Naive thymus-derived CD4-positive, alpha-beta T cell (primary cell): ENCODE measurements at regions of chr12 and their contacts with region 1.

Region 1: DNA sequence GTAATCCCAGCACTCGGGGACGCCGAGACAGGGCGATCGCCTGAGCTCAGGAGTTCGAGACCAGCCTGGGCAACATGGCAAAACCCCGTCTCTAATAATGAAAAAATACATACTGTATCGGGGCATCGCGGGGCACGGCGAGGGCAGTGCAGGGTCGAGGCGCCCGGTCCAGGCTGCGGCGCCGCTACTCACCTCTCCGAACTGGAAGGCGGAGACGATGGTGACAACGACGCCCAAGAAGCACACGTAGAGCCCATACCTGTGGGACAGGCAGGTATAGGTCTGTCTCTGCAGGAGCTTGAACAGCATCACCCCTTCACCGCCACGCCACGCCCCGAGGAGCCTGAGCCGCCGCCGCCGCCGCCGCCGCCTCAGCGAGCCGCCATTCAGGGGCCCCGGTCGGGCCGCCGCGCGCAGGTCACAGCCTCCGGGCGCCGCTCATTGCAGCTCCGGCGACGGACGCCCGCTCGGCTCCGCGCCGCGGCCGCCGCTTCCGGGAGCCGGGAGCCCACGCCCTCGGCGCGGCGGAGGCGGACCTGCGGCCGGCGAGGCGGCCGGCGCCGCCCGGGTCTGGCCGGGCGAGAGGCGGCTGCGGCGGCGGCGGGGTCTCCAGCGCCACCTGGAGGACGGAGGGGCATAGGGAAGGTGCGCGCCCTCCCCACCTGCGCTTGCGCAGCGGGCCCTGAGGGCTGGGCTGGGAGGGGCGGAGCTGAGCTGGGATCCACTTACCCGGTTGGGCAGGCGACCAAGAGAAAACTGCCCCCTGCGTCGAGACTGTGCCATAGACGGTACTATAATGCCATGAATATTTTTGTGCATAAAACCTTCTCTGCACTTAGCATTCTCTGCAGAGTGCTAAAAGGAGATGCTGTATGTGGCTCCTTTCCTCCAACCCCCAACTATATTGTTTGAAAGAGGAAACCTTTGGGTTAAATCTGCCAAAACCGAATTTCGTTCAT is at the start of gene GNPTAB:
- DNase-seq: peak; percentile 92 to 98 (median 95)
- ATAC-seq: peak; percentile 98
- H3K4me3 ChIP-seq: peak within 1 kb of the TSS; percentile 89
- H3K4me3 Mint-ChIP-seq: peak within 1 kb of the TSS; percentile 88 to 99 (median 98)
- H3K27ac ChIP-seq: peak within 1 kb of the TSS; percentile 77
- H3K27ac Mint-ChIP-seq: peak within 1 kb of the TSS; percentile 76 to 98 (median 93)
- H3K4me1 ChIP-seq: peaks cover 10 to 19% of the 10 kb centered on the region in 2 donors
- H3K4me1 Mint-ChIP-seq: peaks cover 22 to 52% (median 47%) of the 10 kb centered on the region in 7 donors
- H3K27me3 ChIP-seq: no peaks in the 10 kb centered on the region
- H3K27me3 Mint-ChIP-seq: no peaks in the 10 kb centered on the region
- total RNA-seq, gene GNPTAB: 42.0 to 85.1 (median 62.2) TPM

Region 2: GRCh38 chr12:101280006-101280505 is 550.6 kb before region 1 on chr12 and contains the start of gene UTP20:
- CTCF ChIA-PET with region 1: no interaction called
- POLR2A ChIA-PET with region 1: no interaction called
- intact Hi-C with region 1: loop called (anchors 2 to 5 kb)
- DNase-seq: peak; percentile 90 to 94 (median 92)
- ATAC-seq: peak; percentile 100
- H3K4me3 ChIP-seq: peak within 1 kb of the TSS; percentile 72
- H3K4me3 Mint-ChIP-seq: peak within 1 kb of the TSS; percentile 92 to 97 (median 96)
- H3K27ac ChIP-seq: peak within 1 kb of the TSS; percentile 63
- H3K27ac Mint-ChIP-seq: peak within 1 kb of the TSS; percentile 77 to 94 (median 87)
- H3K4me1 ChIP-seq: peaks cover 5% of the 10 kb centered on the region in 2 donors
- H3K4me1 Mint-ChIP-seq: peaks cover 11 to 28% (median 16%) of the 10 kb centered on the region in 7 donors
- H3K27me3 ChIP-seq: no peaks in the 10 kb centered on the region
- H3K27me3 Mint-ChIP-seq: peaks cover 8 to 24% (median 16%) of the 10 kb centered on the region in 5 donors
- total RNA-seq, gene UTP20: 10.8 to 20.8 (median 14.9) TPM

Region 3: GRCh38 chr12:101670007-101670687 is 160.5 kb before region 1 on chr12:
- CTCF ChIA-PET with region 1: no interaction called
- POLR2A ChIA-PET with region 1: no interaction called
- intact Hi-C with region 1: loop called in 1 of 2 experiments (anchors 2 kb)
- DNase-seq: peak in 7 of 9 donors; percentile 30 to 59 (median 54)
- ATAC-seq: peak; percentile 88
- H3K4me3 ChIP-seq: no peak overlapping the region
- H3K4me3 Mint-ChIP-seq: peak overlapping the region in 4 of 10 donors; percentile 30 to 44 (median 39)
- H3K27ac ChIP-seq: no peak overlapping the region
- H3K27ac Mint-ChIP-seq: peak overlapping the region in 8 of 9 donors; percentile 10 to 71 (median 40)
- H3K4me1 ChIP-seq: peaks cover 4 to 18% of the 10 kb centered on the region in 2 donors
- H3K4me1 Mint-ChIP-seq: peaks cover 13 to 28% (median 21%) of the 10 kb centered on the region in 7 donors
- H3K27me3 ChIP-seq: no peaks in the 10 kb centered on the region
- H3K27me3 Mint-ChIP-seq: peaks cover 5 to 15% (median 9%) of the 10 kb centered on the region in 5 donors

Region 4: DNA sequence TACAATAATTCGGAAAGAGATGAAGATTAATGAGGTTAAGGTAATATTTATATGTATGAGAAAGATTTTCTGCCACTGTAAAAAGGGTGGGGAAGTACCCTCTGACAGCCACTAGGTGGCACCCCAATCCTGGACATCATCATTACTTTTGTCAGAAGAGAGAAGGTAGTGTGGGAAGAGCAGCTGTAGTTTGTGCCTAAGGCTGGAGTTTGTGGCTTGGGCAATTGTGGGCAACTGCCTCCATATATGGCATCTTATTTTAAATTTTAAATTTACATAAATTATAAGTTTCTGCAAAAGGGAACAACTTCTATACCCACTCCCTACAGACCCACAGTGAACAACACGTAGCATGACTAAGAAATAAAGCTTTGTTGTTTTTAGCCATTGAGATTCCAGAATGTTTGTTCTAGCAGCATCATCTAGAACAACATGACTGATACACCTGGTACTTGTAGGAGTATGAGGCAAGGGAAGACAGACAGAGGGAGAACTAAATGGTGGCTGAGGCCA is 56.9 kb before region 1 on chr12:
- CTCF ChIA-PET with region 1: interaction called, 61 read pairs
- POLR2A ChIA-PET with region 1: interaction called, 22 read pairs
- intact Hi-C with region 1: loop called (anchors 1 kb)
- DNase-seq: peak; percentile 37 to 76 (median 72)
- ATAC-seq: peak; percentile 94
- H3K4me3 ChIP-seq: no peak overlapping the region
- H3K4me3 Mint-ChIP-seq: no peak overlapping the region
- H3K27ac ChIP-seq: no peak overlapping the region
- H3K27ac Mint-ChIP-seq: peak overlapping the region in 2 of 9 donors; percentile 25 to 65
- H3K4me1 ChIP-seq: no peaks in the 10 kb centered on the region
- H3K4me1 Mint-ChIP-seq: peaks cover 0 to 50% (median 9%) of the 10 kb centered on the region in 7 donors
- H3K27me3 ChIP-seq: no peaks in the 10 kb centered on the region
- H3K27me3 Mint-ChIP-seq: no peaks in the 10 kb centered on the region

Region 5: GRCh38 chr12:101876861-101877815 is 46.5 kb after region 1 on chr12 and contains the start of gene DRAM1:
- CTCF ChIA-PET with region 1: interaction called, 4 read pairs
- POLR2A ChIA-PET with region 1: interaction called, 3 read pairs
- intact Hi-C with region 1: loop called (anchors 1 to 2 kb)
- DNase-seq: peak; percentile 45 to 85 (median 61)
- ATAC-seq: peak; percentile 93
- H3K4me3 ChIP-seq: peak within 1 kb of the TSS; percentile 56
- H3K4me3 Mint-ChIP-seq: peak within 1 kb of the TSS; percentile 80 to 95 (median 92)
- H3K27ac ChIP-seq: peak within 1 kb of the TSS; percentile 78
- H3K27ac Mint-ChIP-seq: peak within 1 kb of the TSS; percentile 73 to 90 (median 84)
- H3K4me1 ChIP-seq: peaks cover 0 to 6% of the 10 kb centered on the region in 2 donors
- H3K4me1 Mint-ChIP-seq: peaks cover 8 to 18% (median 12%) of the 10 kb centered on the region in 7 donors
- H3K27me3 ChIP-seq: no peaks in the 10 kb centered on the region
- H3K27me3 Mint-ChIP-seq: peaks cover 0 to 4% (median 0%) of the 10 kb centered on the region in 5 donors
- total RNA-seq, gene DRAM1: 2.4 to 9.5 (median 2.6) TPM